PC-9 (cell line): ENCODE measurements at regions of chr16 and their contacts with region 1.

Region 1: DNA sequence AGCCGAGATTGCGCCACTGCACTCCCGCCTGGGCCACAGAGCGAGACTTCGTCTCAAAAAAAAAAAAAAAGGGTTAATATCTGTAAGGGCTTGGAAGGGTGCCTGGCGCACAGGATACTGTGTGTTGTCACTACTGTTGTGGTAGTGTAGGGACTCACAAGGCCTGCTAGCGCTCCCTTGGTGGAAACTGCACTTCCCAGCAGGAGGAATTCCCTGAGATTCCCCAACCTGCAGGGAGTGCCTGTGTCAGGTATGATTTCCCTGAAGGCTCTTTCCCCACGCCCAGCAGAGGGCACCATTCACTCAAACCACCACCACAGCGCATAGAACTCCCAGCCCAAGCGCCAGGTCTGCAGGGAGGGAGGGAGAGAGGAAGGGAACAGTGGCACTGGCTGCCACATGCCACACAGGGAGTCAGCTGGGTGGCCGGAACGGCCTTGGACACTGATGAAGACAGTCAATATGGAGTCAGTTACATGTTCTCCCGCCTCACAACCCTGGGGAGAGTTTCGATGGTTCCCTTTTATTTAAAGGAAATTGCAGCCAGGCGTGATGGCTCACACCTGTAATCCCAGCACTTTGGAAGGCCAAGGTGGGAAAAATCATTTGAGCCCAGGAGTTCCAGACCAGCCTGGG is 32.7 kb upstream of the CDH1 start:
- DNase-seq: peak; percentile 73 to 85
- H3K4me3 ChIP-seq: no peak overlapping the region
- H3K27ac ChIP-seq: no peak overlapping the region
- H3K4me1 ChIP-seq: peaks cover 31% of the 10 kb centered on the region
- H3K27me3 ChIP-seq: no peaks in the 10 kb centered on the region
- CTCF ChIP-seq: peak; percentile 86

Region 2: DNA sequence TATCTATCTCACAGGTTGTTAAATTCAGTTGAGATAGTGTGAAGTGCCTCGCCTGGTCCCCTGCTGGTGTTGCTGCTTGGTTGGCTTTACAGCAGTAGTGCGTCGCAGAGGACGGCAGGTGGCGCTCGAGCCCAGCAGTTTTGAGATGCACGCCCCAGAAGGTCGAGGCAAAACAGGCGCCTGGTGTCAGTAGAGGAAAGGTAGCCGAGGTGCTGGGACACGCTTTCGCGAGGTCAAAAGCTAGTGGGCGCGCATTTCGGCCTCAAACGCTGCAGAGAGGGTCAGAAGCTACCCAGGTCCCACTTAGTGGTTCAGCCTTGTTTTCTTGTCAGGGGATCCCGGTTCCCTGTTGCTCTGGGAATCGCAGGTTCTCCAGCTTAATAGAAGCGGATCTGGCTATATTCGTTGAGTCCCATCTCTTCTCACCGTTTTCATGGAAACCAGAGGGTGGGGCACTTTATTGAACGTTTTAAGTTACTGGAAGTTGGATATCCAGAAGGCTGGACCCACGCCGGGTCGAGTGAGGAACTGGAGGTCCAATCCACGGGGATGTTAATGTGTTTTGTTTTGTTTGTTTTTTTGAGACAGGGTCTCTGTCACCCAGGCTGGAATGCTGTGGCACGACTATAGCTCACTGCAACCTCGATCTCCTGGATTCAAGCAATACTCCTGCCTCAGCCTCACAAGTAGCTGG is 175.5 kb before region 1 on chr16:
- CTCF ChIA-PET with region 1: no interaction called
- POLR2A ChIA-PET with region 1: no interaction called
- intact Hi-C with region 1: loop called (anchors 5 kb)
- DNase-seq: peak; percentile 62 to 81
- H3K4me3 ChIP-seq: no peak overlapping the region
- H3K27ac ChIP-seq: no peak overlapping the region
- H3K4me1 ChIP-seq: peaks cover 10% of the 10 kb centered on the region
- H3K27me3 ChIP-seq: no peaks in the 10 kb centered on the region
- CTCF ChIP-seq: peak; percentile 88

Region 3: DNA sequence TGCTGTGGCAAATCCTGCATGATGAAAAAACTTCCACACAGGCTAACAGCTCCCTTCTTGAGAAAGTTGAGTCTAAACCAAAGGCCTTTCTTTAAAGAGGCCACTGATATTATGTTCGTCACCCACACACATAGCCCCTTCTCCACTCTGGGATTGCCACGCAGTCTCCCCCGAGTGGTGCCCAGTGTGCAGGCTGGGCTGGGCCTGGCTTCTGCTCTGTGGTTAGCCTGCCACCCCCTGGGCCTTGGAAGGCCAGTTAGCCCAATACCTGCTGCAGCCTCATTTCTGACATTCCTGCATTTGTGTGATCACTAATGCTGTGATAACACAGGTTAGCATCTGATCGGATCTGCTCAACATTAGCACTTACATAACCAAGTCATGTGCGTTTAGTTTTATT is 14.4 kb before region 1 on chr16:
- CTCF ChIA-PET with region 1: no interaction called
- POLR2A ChIA-PET with region 1: interaction called, 10 read pairs
- intact Hi-C with region 1: no loop called
- DNase-seq: no peak
- H3K4me3 ChIP-seq: no peak overlapping the region
- H3K27ac ChIP-seq: no peak overlapping the region
- H3K4me1 ChIP-seq: no peaks in the 10 kb centered on the region
- H3K27me3 ChIP-seq: no peaks in the 10 kb centered on the region
- CTCF ChIP-seq: no peak

Region 4: DNA sequence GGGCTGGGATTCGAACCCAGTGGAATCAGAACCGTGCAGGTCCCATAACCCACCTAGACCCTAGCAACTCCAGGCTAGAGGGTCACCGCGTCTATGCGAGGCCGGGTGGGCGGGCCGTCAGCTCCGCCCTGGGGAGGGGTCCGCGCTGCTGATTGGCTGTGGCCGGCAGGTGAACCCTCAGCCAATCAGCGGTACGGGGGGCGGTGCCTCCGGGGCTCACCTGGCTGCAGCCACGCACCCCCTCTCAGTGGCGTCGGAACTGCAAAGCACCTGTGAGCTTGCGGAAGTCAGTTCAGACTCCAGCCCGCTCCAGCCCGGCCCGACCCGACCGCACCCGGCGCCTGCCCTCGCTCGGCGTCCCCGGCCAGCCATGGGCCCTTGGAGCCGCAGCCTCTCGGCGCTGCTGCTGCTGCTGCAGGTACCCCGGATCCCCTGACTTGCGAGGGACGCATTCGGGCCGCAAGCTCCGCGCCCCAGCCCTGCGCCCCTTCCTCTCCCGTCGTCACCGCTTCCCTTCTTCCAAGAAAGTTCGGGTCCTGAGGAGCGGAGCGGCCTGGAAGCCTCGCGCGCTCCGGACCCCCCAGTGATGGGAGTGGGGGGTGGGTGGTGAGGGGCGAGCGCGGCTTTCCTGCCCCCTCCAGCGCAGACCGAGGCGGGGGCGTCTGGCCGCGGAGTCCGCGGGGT is 32.8 kb after region 1 on chr16 and contains the start of gene CDH1:
- CTCF ChIA-PET with region 1: no interaction called
- POLR2A ChIA-PET with region 1: interaction called, 9 read pairs
- intact Hi-C with region 1: loop called (anchors 1 kb)
- DNase-seq: peak; percentile 84 to 94
- H3K4me3 ChIP-seq: peak within 1 kb of the TSS; percentile 80
- H3K27ac ChIP-seq: peak within 1 kb of the TSS; percentile 85
- H3K4me1 ChIP-seq: peaks cover 50% of the 10 kb centered on the region
- H3K27me3 ChIP-seq: no peaks in the 10 kb centered on the region
- CTCF ChIP-seq: 0 out of 2 replicates have a peak, but pooled peaks have one; percentile 4
- total RNA-seq, gene CDH1: 117 and 120 TPM in 2 replicates

Region 5: GRCh38 chr16:68760671-68761275 is 56.4 kb after region 1 on chr16:
- CTCF ChIA-PET with region 1: no interaction called
- POLR2A ChIA-PET with region 1: no interaction called
- intact Hi-C with region 1: loop called (anchors 1 kb)
- DNase-seq: peak; percentile 73 to 85
- H3K4me3 ChIP-seq: no peak overlapping the region
- H3K27ac ChIP-seq: peak overlapping the region; percentile 81
- H3K4me1 ChIP-seq: peaks cover 36% of the 10 kb centered on the region
- H3K27me3 ChIP-seq: no peaks in the 10 kb centered on the region
- CTCF ChIP-seq: no peak

Region 6: DNA sequence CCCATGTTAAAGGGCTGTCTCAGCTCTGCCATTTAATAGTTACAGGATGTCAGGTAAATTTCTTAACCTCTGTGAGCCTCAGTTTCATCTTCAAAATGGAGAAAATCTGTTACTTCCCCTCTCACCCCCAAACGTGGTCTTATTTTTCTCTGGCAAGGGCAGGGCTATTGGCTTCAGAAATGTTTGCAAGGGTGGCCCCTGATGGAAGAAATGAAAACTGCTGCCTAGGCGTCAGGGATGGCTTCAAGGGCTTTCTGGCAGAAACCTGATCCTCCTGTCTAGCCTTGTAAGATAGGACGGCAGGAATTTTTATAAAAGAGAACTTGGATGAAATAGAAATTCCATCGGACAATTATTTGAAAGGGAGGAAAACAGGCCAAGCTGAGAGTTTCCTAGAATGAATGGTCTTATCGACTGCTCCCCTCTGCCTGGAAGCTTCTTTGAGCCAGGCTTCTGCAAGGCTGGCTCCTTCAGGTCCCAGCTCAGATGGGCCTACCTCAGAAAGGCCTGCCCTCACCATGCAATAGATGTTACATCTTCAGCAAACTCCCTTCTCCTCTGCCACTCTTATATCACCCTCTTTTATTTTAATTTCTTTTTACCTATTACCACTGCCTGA is 96.0 kb after region 1 on chr16:
- CTCF ChIA-PET with region 1: interaction called, 4 read pairs
- POLR2A ChIA-PET with region 1: no interaction called
- intact Hi-C with region 1: loop called (anchors 1 kb)
- DNase-seq: peak; percentile 80 to 83
- H3K4me3 ChIP-seq: no peak overlapping the region
- H3K27ac ChIP-seq: 0 out of 2 replicates have a peak overlapping the region, but pooled peaks have one; percentile 28
- H3K4me1 ChIP-seq: peaks cover 42% of the 10 kb centered on the region
- H3K27me3 ChIP-seq: no peaks in the 10 kb centered on the region
- CTCF ChIP-seq: peak; percentile 81

Region 7: GRCh38 chr16:68843482-68844210 is 139.3 kb after region 1 on chr16 and contains the start of gene TANGO6:
- CTCF ChIA-PET with region 1: no interaction called
- POLR2A ChIA-PET with region 1: interaction called, 4 read pairs
- intact Hi-C with region 1: loop called (anchors 1 kb)
- DNase-seq: peak; percentile 55 to 70
- H3K4me3 ChIP-seq: peak within 1 kb of the TSS; percentile 80
- H3K27ac ChIP-seq: 0 out of 2 replicates have a peak within 1 kb of the TSS, but pooled peaks have one; percentile 5
- H3K4me1 ChIP-seq: no peaks in the 10 kb centered on the region; the same call in 1 of the 2 replicates
- H3K27me3 ChIP-seq: no peaks in the 10 kb centered on the region
- CTCF ChIP-seq: no peak; the same call in 1 of the 2 replicates
- total RNA-seq, gene TANGO6: 4.7 and 5.8 TPM in 2 replicates